HCT116 (cell line): ENCODE measurements at regions of chr2 and their contacts with region 1.

Region 1: GRCh38 chr2:208175069-208175839 is 11.9 kb upstream of the CRYGA start:
- DNase-seq: peak; percentile 75
- ATAC-seq: peak; percentile 99
- H3K4me3 ChIP-seq: no peak overlapping the region
- H3K27ac ChIP-seq: no peak overlapping the region
- H3K4me1 ChIP-seq: peaks cover 6 to 28% of the 10 kb centered on the region in 2 experiments; a peak in 3 of 4 replicates
- H3K27me3 ChIP-seq: no peaks in the 10 kb centered on the region
- CTCF ChIP-seq: peak; percentile 72 to 90 (median 89); a peak in 5 of 6 replicates
- POLR2A ChIP-seq: no peak
- RAD21 ChIP-seq: peak; percentile 80

Region 2: DNA sequence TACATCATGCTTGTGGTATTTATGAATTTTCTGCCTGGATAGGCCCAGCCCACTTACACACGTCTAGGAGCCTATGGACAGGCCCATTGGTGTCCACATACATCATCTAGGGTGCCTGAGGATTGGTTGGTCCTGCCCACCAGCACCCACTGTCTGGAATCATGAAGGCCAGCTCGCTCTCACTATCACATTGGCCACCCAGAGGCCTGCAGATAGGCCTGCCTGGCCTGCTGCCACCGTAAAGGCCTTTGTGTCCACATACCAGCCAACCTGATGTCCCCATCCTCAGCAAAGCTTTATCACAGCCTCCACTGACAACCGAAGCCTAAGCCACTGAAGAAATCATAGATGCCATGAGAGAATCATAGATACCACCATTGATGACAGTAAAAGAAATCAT is 590.3 kb before region 1 on chr2:
- CTCF ChIA-PET with region 1: no interaction called
- POLR2A ChIA-PET with region 1: no interaction called
- RAD21 ChIA-PET with region 1: no interaction called
- intact Hi-C with region 1: no loop called
- DNase-seq: no peak
- ATAC-seq: no peak
- H3K4me3 ChIP-seq: no peak overlapping the region
- H3K27ac ChIP-seq: no peak overlapping the region
- H3K4me1 ChIP-seq: no peaks in the 10 kb centered on the region
- H3K27me3 ChIP-seq: no peaks in the 10 kb centered on the region
- CTCF ChIP-seq: no peak
- POLR2A ChIP-seq: no peak
- RAD21 ChIP-seq: no peak

Region 3: GRCh38 chr2:208164951-208165755 is 10.1 kb before region 1 on chr2:
- CTCF ChIA-PET with region 1: interaction called, 13 read pairs
- POLR2A ChIA-PET with region 1: no interaction called
- RAD21 ChIA-PET with region 1: no interaction called
- intact Hi-C with region 1: no loop called
- DNase-seq: no peak
- ATAC-seq: no peak
- H3K4me3 ChIP-seq: no peak overlapping the region
- H3K27ac ChIP-seq: no peak overlapping the region
- H3K4me1 ChIP-seq: peaks cover 4 to 10% of the 10 kb centered on the region in 2 experiments; a peak in 2 of 4 replicates
- H3K27me3 ChIP-seq: no peaks in the 10 kb centered on the region
- CTCF ChIP-seq: no peak
- POLR2A ChIP-seq: no peak
- RAD21 ChIP-seq: no peak

Region 4: DNA sequence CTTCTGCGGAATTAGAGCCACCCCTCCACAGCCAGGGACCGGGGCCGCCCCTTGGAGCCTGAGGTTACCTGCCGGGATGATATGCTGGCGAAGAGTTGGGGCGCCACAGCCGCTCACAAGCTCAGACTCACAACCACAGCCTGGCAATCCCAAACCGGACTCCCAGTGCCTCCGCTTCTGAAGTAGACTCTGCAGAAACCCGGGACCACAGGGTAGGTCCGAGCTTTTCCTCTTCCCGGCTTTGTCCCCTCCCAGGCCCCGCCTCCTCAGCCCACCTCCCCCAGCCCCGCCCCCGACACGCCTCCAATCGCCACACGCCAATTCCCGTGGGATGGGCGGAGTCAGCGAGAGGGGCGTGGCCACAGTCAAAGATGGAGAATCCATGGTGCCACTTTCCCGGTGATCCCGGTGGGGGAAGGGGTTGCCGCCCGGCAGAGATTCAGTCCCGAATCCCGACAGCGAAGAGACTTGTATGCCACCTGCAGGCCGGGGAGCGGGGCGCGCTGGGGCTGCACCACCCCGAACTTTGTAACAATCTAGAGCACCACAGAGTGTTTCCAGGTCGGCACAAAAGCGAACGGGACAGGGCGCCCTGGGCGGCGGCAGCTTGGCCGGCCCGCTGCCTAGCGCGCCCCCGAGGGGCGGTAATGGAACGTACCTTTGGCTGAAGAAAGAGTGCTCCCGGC is 79.8 kb after region 1 on chr2 and contains the start of gene IDH1:
- CTCF ChIA-PET with region 1: interaction called, 24 read pairs
- POLR2A ChIA-PET with region 1: interaction called, 3 read pairs
- RAD21 ChIA-PET with region 1: no interaction called
- intact Hi-C with region 1: loop called (anchors 2 kb)
- DNase-seq: peak; percentile 87
- ATAC-seq: peak; percentile 79
- H3K4me3 ChIP-seq: peak within 1 kb of the TSS; percentile 79 to 80
- H3K27ac ChIP-seq: peak within 1 kb of the TSS; percentile 73
- H3K4me1 ChIP-seq: peaks cover 10 to 20% of the 10 kb centered on the region in 2 experiments; a peak in 3 of 4 replicates
- H3K27me3 ChIP-seq: no peaks in the 10 kb centered on the region
- CTCF ChIP-seq: peak; percentile 60 to 64 (median 62); a peak in 5 of 6 replicates
- POLR2A ChIP-seq: no peak
- RAD21 ChIP-seq: peak; percentile 61
- total RNA-seq, gene IDH1: 91.2 TPM